ENCODE measurements at regions of chr20 and their contacts with region 1.

Region 1: GRCh38 chr20:45771182-45771759 is 20.4 kb downstream of the WFDC3 start:
- DNase-seq: peak; percentile 80
- CTCF ChIP-seq: peak; percentile 92

Region 2: GRCh38 chr20:45300961-45301360 is 470.3 kb before region 1 on chr20:
- CTCF ChIA-PET with region 1: interaction called, 13 read pairs
- POLR2A ChIA-PET with region 1: no interaction called
- DNase-seq: peak; percentile 48
- CTCF ChIP-seq: peak; percentile 41

Region 3: DNA sequence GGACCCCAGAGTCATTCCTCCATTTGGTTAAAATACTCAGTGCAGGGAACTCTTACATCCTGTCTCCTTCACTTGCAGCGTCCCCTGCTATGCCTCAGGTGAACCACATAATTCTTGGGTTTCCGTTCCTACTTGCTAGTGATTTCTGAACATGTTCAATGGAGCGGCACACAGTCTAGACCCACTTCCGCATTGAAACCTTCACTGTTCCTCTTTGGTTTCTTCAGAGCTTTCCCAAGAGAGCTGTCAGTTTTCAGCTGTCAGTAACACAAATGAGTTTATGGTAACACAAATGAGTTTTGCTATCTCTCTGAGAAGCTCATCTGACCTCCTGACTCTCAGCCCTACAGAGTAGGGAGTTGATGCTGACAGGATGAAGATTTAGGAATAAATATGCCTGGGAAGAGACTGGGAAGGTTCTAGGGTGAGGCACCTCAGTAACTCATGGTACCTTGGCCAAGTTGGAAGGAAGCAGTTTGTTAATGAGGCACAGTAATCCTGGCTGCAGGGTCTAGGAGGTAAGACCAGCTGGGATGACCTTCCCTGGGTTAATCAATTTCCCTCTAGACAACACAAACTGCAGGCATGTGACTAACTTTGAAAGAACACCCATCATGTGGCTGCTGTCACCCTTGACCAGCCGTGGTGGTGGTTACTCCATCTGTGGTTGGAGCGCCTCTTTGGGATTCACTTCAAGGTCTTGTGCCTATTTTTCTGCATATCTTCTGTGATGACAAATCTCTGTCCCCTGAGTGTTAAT is 402.9 kb before region 1 on chr20:
- CTCF ChIA-PET with region 1: interaction called, 37 read pairs
- POLR2A ChIA-PET with region 1: no interaction called
- DNase-seq: peak; percentile 86
- CTCF ChIP-seq: peak; percentile 6

Region 4: GRCh38 chr20:45450097-45450818 is 321.0 kb before region 1 on chr20:
- CTCF ChIA-PET with region 1: interaction called, 49 read pairs
- POLR2A ChIA-PET with region 1: no interaction called
- DNase-seq: peak; percentile 32
- CTCF ChIP-seq: peak; percentile 49

Region 5: DNA sequence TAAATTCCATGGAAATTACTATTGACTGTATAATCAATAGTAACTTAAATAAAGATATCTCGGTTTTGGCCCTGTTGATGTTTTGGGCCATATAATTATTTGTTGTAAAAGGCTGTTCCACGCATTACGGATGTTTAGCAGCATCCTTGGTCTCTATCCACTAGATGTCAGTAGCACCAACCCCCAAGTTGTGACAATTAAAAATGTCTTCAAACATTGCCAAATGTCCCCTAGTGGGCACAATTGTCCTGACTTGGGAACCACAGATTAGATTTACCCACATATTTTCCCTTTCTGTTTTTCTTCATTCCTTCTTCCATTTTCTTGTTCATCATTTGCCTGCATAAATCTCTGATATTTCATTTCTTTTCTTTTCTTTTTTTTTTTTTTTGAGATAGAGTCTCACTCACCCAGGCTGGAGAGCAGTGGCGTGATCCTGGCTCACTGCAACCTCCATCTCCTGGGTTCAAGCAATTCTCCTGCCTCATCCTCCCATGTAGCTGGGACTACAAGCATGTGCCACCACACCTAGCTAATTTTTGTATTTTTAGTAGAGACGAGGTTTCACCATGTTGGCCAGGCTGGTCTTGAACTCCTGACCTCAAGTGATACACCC is 178.6 kb before region 1 on chr20:
- CTCF ChIA-PET with region 1: interaction called, 34 read pairs
- POLR2A ChIA-PET with region 1: no interaction called
- DNase-seq: peak; percentile 27
- CTCF ChIP-seq: peak; percentile 51

Region 6: GRCh38 chr20:45725134-45725533 is 46.1 kb before region 1 on chr20:
- CTCF ChIA-PET with region 1: no interaction called
- POLR2A ChIA-PET with region 1: no interaction called
- DNase-seq: no peak
- CTCF ChIP-seq: no peak

Region 7: DNA sequence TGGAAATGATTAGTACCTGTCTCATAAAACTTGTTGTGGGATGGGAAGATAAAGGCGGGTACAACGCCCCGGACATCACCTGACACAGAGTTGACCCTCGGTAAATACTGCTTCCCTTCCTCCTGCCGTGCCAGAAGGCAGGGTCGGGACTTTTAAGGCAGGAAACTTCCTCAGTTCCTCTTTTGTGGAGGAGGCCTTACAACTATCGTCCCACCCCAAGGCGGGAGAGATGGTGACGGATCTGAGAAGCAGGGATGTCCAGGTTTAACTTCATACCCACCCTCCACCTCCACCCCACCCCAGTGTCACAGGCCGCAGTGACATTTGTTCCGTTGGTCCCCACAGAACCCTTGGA is 21.0 kb after region 1 on chr20:
- CTCF ChIA-PET with region 1: interaction called, 26 read pairs
- POLR2A ChIA-PET with region 1: no interaction called
- DNase-seq: no peak
- CTCF ChIP-seq: no peak

Region 8: GRCh38 chr20:45857114-45857881 is 86.0 kb after region 1 on chr20 and contains the starts of genes ACOT8 and ZSWIM3:
- CTCF ChIA-PET with region 1: no interaction called
- POLR2A ChIA-PET with region 1: no interaction called
- DNase-seq: peak; percentile 100
- CTCF ChIP-seq: no peak

Region 9: DNA sequence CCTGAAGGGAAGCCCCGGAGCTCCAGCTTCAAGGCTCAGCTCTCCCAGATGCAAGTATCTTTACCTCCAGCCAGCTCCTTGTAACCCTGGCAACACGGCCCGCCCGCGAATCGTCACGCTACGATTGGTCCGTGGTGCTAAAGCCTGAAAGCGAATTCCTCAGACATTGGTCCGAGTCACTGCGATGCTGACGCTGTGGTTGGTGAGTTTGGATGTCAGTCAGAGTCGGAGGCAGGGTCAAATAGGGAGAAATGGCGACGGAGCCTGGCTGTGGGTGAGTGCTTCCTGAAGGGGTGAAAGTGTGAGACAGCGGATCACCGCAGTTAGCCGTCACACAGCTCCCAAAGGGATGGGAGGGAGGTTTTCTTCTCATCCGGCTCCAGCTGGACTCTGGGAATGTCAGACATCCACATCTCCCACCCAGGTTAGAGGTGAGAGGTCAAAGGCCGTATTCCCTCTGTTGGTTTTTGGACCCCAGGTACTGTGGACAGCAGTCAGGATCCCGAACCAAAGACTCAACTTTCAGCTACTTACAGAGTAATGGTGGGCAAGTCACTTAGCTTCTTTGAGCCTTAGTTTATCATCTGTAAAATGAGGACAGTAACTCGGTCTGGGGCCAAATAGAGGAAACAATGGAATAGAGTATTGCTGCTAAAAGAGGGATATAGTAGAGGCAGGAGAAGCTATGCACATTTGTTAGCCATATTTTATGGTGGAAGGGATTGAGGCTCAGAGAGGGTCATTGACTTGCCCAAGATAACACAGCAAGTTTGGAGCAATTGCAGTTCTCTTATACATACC is 109.9 kb after region 1 on chr20 and contains the start of gene ZSWIM1:
- CTCF ChIA-PET with region 1: no interaction called
- POLR2A ChIA-PET with region 1: no interaction called
- DNase-seq: peak; percentile 98
- CTCF ChIP-seq: no peak

Measured in GM10248 (cell line).